ENCODE measurements at regions of chrX and their contacts with region 1.

Region 1: DNA sequence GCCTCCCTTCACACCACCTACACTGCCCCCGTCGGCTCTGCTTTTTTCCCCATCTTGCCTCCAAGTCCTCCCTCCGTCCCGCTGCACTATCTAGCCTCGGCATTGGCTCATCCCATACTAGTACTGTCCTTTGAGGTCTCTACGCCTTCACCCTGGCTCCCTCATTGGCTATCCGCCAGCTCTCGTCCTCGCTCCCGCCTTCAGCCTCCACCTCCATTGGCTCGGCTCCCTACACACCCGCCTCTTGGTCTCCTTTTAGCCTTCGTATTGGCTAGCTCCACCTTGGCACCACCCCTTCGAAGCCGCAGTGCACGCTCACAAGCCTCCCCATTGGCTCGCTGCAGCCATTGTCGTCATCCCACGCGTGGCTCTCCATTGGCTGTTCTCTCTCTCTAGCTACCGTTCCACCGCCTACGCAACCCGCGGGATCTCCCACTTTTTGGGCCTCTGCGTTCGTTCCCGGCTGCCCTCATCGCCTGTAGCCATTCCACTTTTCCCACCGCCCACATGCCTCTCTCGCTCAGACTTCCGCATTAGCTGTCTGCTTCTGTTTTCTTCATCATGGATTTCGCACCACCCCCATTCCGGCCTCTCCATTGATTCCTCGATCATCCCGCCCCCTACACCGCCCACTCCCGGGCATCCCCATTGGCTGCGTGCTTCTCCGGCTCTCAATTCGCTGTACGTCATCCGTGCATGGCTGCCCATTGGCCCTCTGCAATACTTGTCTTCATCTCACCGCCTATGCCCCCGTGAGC is 404 bp upstream of the PPP1R3F start:
- DNase-seq: peak; percentile 77 to 98 (median 94)
- ATAC-seq: peak; percentile 81 to 82
- H3K4me3 Mint-ChIP-seq: peak overlapping the region; percentile 85 to 99 (median 98)
- H3K27ac Mint-ChIP-seq: peak overlapping the region; percentile 99 to 100 (median 100)
- H3K4me1 Mint-ChIP-seq: peaks cover 5 to 49% (median 42%) of the 10 kb centered on the region in 4 donors
- H3K27me3 Mint-ChIP-seq: no peaks in the 10 kb centered on the region

Region 2: GRCh38 chrX:49191033-49191871 is 77.9 kb before region 1 on chrX:
- POLR2A ChIA-PET with region 1: interaction called, 17 read pairs
- DNase-seq: peak; percentile 56 to 95 (median 84)
- ATAC-seq: peak; percentile 87 to 88
- H3K4me3 Mint-ChIP-seq: peak overlapping the region; percentile 81 to 95 (median 92)
- H3K27ac Mint-ChIP-seq: peak overlapping the region; percentile 76 to 98 (median 93)
- H3K4me1 Mint-ChIP-seq: peaks cover 14 to 35% (median 29%) of the 10 kb centered on the region in 4 donors
- H3K27me3 Mint-ChIP-seq: no peaks in the 10 kb centered on the region

Region 3: GRCh38 chrX:49209434-49210251 is 59.5 kb before region 1 on chrX:
- POLR2A ChIA-PET with region 1: no interaction called
- DNase-seq: peak in 2 of 10 donors; percentile 16 to 20
- ATAC-seq: peak; percentile 54 to 74
- H3K4me3 Mint-ChIP-seq: peak overlapping the region in 9 of 10 donors; percentile 22 to 61 (median 26)
- H3K27ac Mint-ChIP-seq: peak overlapping the region in 2 of 10 donors; percentile 38 to 49
- H3K4me1 Mint-ChIP-seq: peaks cover 0 to 4% (median 0%) of the 10 kb centered on the region in 4 donors
- H3K27me3 Mint-ChIP-seq: no peaks in the 10 kb centered on the region

Region 4: DNA sequence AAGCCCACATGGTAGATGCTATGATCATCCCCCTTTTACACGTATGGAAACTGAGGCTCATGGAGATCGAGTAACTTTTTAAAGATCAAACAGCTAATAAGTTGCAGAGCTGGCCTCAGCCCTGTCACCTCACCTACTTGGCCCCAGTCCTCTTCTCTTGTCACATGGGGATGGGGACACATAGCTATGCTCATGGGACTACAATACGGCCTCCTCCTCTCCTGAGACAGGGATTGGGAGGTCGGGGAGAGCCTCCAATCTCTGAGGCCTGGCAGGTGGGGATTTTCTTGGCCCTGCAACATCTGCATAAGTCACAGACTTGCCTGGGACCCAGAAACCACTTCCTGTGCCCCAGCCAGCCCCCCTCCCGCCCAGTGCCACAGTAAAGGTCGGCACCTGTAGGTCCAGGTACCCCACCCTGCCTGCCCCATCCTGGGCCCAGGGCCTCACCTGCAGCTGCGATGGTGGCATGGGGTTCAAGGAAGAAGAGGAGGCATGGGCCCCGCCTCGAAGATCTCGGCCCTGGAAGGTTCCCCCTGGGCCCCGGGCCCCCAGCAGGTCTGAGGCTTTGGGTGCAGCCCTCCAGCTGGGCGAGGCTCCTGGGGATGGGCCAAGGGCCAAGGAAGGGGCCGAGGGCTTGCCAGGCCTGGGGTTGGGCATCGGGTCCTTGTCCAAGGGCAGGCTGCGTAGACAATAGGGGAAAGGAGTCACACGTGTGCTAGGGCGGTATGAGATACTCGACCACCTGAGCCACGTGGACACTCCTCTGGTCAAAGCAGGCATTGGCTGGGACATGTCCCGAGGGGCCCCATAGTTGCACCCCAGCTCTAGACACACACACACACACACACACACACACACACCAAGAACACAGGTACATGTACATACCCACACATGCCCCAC is 11.1 kb before region 1 on chrX:
- POLR2A ChIA-PET with region 1: interaction called, 36 read pairs
- DNase-seq: peak in 2 of 10 donors; percentile 4 to 27
- ATAC-seq: peak; percentile 70 to 76
- H3K4me3 Mint-ChIP-seq: peak overlapping the region in 9 of 10 donors; percentile 12 to 73 (median 53)
- H3K27ac Mint-ChIP-seq: peak overlapping the region in 8 of 10 donors; percentile 25 to 85 (median 61)
- H3K4me1 Mint-ChIP-seq: peaks cover 9 to 30% (median 26%) of the 10 kb centered on the region in 4 donors
- H3K27me3 Mint-ChIP-seq: no peaks in the 10 kb centered on the region

Region 5: DNA sequence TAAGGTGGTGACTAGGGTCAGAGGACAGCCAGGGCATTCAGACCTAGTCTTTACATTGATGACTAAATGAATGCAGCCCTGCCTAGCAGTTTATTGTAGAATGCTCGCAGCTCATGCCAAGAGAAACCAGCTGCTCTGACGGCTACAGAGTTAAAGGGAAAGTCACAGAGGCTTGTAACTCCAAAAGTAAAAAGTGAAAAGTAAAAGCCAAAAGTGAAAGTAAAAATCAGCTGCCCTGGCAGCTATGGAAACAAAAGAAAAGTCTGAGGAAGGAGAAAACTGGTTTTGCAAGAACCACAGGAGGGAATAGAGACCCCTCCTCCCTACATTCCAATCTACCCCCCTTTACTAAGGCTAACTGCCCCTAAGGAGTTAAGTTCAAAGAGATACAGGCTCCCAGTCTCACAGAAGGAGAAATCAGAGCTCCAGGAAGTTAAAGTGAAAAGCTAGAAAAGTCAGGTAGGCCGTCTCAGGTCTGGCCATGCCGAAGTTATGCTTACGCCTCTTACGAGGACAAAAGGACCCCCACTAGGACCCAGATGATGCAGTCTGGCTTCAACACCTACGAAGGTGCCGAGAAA is 40.3 kb after region 1 on chrX:
- POLR2A ChIA-PET with region 1: interaction called, 22 read pairs
- DNase-seq: peak in 6 of 10 donors; percentile 1 to 60 (median 36)
- ATAC-seq: peak; percentile 65 to 83
- H3K4me3 Mint-ChIP-seq: peak overlapping the region; percentile 77 to 93 (median 86)
- H3K27ac Mint-ChIP-seq: peak overlapping the region; percentile 93 to 99 (median 98)
- H3K4me1 Mint-ChIP-seq: peaks cover 14 to 24% (median 22%) of the 10 kb centered on the region in 4 donors
- H3K27me3 Mint-ChIP-seq: no peaks in the 10 kb centered on the region

Measured in naive thymus-derived CD8-positive, alpha-beta T cell (primary cell).